Activated CD4-positive, alpha-beta T cell treated with anti-CD3 and anti-CD28 coated beads, Interleukin-2, amount 10 ng/mL, durations not matched to agents 7 days and 5 days (primary cell): ENCODE measurements at regions of chr16 and their contacts with region 1.

Region 1: GRCh38 chr16:53456625-53457024 is 22.4 kb downstream of the RBL2 start:
- DNase-seq: peak; percentile 69
- H3K4me3 Mint-ChIP-seq: peak overlapping the region; percentile 73
- H3K27ac Mint-ChIP-seq: peak overlapping the region; percentile 96
- H3K4me1 Mint-ChIP-seq: peaks cover 90% of the 10 kb centered on the region
- H3K27me3 Mint-ChIP-seq: no peaks in the 10 kb centered on the region

Region 2: DNA sequence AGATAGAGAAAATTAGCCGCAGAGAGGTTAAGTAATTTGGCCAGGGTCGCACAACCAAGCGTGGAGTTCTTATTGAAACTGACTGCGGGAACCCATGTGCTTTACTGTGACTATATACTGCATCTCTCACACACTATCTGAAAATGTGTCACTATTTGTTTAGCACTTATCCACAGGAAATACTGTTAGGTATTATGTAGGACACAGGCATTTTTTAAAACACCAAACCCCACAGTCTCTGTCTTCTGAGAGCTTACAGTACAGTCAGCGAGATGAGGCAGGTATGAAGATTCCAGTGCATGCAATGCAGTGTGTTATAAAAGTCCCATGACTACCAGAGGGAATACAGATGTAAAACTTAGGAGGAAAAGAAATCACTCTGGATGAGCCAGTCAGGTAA is 11.1 kb before region 1 on chr16:
- CTCF ChIA-PET with region 1: interaction called, 10 read pairs
- POLR2A ChIA-PET with region 1: no interaction called
- DNase-seq: no peak
- H3K4me3 Mint-ChIP-seq: peak overlapping the region; percentile 23
- H3K27ac Mint-ChIP-seq: peak overlapping the region; percentile 74
- H3K4me1 Mint-ChIP-seq: peaks cover 33% of the 10 kb centered on the region
- H3K27me3 Mint-ChIP-seq: no peaks in the 10 kb centered on the region

Region 3: DNA sequence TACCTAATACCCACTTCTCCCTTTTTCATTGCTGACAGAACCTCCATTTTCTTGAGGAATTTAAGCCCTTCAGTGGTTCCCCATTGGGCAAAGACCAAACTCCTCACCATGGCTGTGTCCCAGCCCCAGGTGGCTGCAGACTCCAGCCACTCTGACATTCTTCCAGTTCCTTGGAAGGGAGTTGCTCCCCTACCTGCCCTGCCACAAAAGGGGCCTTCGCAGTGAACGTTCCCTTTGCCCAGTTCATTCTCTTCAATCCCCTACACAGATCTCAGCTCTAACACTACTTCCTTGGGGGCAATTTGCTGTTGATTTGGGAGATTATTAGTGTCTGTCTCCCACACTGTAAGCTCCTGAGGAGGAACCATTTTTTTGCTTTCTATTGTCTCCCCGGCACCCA is 49.6 kb after region 1 on chr16:
- CTCF ChIA-PET with region 1: interaction called, 3 read pairs
- POLR2A ChIA-PET with region 1: interaction called, 11 read pairs
- DNase-seq: no peak
- H3K4me3 Mint-ChIP-seq: no peak overlapping the region
- H3K27ac Mint-ChIP-seq: no peak overlapping the region
- H3K4me1 Mint-ChIP-seq: peaks cover 45% of the 10 kb centered on the region
- H3K27me3 Mint-ChIP-seq: no peaks in the 10 kb centered on the region